ENCODE measurements at regions of chr21 and their contacts with region 1.

Region 1: GRCh38 chr21:43803558-43804300 is 14.4 kb downstream of the RRP1 start:
- DNase-seq: peak in 1 of 5 donors; percentile 18
- H3K4me3 ChIP-seq: no peak overlapping the region
- H3K27ac ChIP-seq: no peak overlapping the region
- H3K4me1 ChIP-seq: no peaks in the 10 kb centered on the region
- H3K27me3 ChIP-seq: no peaks in the 10 kb centered on the region
- CTCF ChIP-seq: no peak
- EP300 ChIP-seq: no peak
- POLR2A ChIP-seq: no peak

Region 2: GRCh38 chr21:43825681-43826622 is 22.2 kb after region 1 on chr21:
- intact Hi-C with region 1: no loop called
- DNase-seq: no peak
- H3K4me3 ChIP-seq: no peak overlapping the region
- H3K27ac ChIP-seq: no peak overlapping the region
- H3K4me1 ChIP-seq: peaks cover 2% of the 10 kb centered on the region
- H3K27me3 ChIP-seq: no peaks in the 10 kb centered on the region
- CTCF ChIP-seq: no peak
- EP300 ChIP-seq: no peak
- POLR2A ChIP-seq: no peak

Region 3: GRCh38 chr21:43965911-43966585 is 162.3 kb after region 1 on chr21:
- intact Hi-C with region 1: loop called in 1 of 4 experiments (anchors 5 kb)
- DNase-seq: no peak
- H3K4me3 ChIP-seq: no peak overlapping the region
- H3K27ac ChIP-seq: no peak overlapping the region
- H3K4me1 ChIP-seq: no peaks in the 10 kb centered on the region
- H3K27me3 ChIP-seq: no peaks in the 10 kb centered on the region
- CTCF ChIP-seq: no peak
- EP300 ChIP-seq: no peak
- POLR2A ChIP-seq: no peak

Measured in ovary (tissue), 10 donors.